T-cell (primary cell): ENCODE measurements at regions of chr13 and their contacts with region 1.

Region 1: DNA sequence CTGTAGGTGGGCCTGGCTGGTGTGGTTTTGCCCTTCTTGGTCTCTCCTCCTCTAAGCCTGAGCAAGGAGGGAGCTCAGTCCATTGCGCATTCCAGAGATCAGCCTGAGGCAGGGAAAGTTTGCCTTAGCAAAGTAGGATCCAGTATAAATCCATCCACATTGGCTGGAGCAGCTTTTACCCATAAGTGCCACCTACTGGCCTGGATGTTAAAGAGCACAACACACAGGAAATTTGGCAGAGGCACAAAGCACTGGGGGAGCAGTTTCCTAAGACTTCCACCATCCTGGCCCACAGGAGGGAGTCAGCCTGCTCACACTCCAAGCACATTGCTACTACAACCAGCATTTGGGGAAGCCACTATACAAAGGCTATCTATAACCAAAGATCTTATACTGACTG is 1124.2 kb downstream of the SLITRK1 start:
- DNase-seq: no peak
- ATAC-seq: no peak
- H3K4me3 ChIP-seq: no peak overlapping the region
- H3K4me3 Mint-ChIP-seq: no peak overlapping the region
- H3K27ac ChIP-seq: no peak overlapping the region
- H3K27ac Mint-ChIP-seq: no peak overlapping the region
- H3K4me1 ChIP-seq: no peaks in the 10 kb centered on the region
- H3K4me1 Mint-ChIP-seq: no peaks in the 10 kb centered on the region
- H3K27me3 ChIP-seq: no peaks in the 10 kb centered on the region
- H3K27me3 Mint-ChIP-seq: no peaks in the 10 kb centered on the region

Region 2: GRCh38 chr13:82739881-82740280 is 18.2 kb before region 1 on chr13:
- CTCF ChIA-PET with region 1: interaction called in 1 of 2 experiments, 12 read pairs
- POLR2A ChIA-PET with region 1: no interaction called
- DNase-seq: no peak
- ATAC-seq: no peak
- H3K4me3 ChIP-seq: no peak overlapping the region
- H3K4me3 Mint-ChIP-seq: no peak overlapping the region
- H3K27ac ChIP-seq: no peak overlapping the region
- H3K27ac Mint-ChIP-seq: no peak overlapping the region
- H3K4me1 ChIP-seq: no peaks in the 10 kb centered on the region
- H3K4me1 Mint-ChIP-seq: no peaks in the 10 kb centered on the region
- H3K27me3 ChIP-seq: peaks cover 0 to 5% of the 10 kb centered on the region in 2 experiments
- H3K27me3 Mint-ChIP-seq: no peaks in the 10 kb centered on the region

Region 3: DNA sequence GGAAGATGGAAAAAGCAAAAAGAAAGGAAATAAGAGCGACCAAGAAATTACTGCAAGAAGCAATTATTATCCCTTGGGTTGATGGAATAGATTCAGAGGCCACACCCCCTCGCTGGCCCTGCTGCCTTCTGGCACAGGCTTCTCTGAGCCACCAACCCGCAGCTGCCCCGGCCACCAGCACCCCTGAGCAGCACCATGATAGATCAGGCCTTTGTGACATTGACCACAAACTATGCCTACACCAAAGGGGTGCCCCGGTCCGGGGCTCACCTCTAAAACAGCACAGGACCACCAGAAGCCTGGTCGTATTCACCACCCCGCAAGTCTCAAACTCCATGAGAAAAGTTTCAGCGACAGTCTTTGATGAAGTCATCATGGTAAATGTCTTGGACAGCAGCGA is 64.9 kb after region 1 on chr13:
- CTCF ChIA-PET with region 1: no interaction called
- POLR2A ChIA-PET with region 1: no interaction called
- DNase-seq: no peak
- ATAC-seq: no peak
- H3K4me3 ChIP-seq: no peak overlapping the region
- H3K4me3 Mint-ChIP-seq: no peak overlapping the region
- H3K27ac ChIP-seq: no peak overlapping the region
- H3K27ac Mint-ChIP-seq: no peak overlapping the region
- H3K4me1 ChIP-seq: no peaks in the 10 kb centered on the region
- H3K4me1 Mint-ChIP-seq: no peaks in the 10 kb centered on the region
- H3K27me3 ChIP-seq: no peaks in the 10 kb centered on the region
- H3K27me3 Mint-ChIP-seq: no peaks in the 10 kb centered on the region